ENCODE measurements at regions of chr3 and their contacts with region 1.

Region 1: GRCh38 chr3:56980798-56981390 is 79.6 kb upstream of the SPATA12 start:
- DNase-seq: peak; percentile 83
- H3K4me3 Mint-ChIP-seq: no peak overlapping the region
- H3K27ac Mint-ChIP-seq: peak overlapping the region; percentile 72
- H3K4me1 Mint-ChIP-seq: peaks cover 23% of the 10 kb centered on the region
- H3K27me3 Mint-ChIP-seq: no peaks in the 10 kb centered on the region

Region 2: GRCh38 chr3:56702490-56703315 is 278.2 kb before region 1 on chr3:
- CTCF ChIA-PET with region 1: interaction called, 244 read pairs
- POLR2A ChIA-PET with region 1: no interaction called
- intact Hi-C with region 1: loop called (anchors 2 kb)
- DNase-seq: peak; percentile 36
- H3K4me3 Mint-ChIP-seq: no peak overlapping the region
- H3K27ac Mint-ChIP-seq: no peak overlapping the region
- H3K4me1 Mint-ChIP-seq: peaks cover 11% of the 10 kb centered on the region
- H3K27me3 Mint-ChIP-seq: no peaks in the 10 kb centered on the region

Region 3: GRCh38 chr3:56862352-56863074 is 118.4 kb before region 1 on chr3:
- CTCF ChIA-PET with region 1: interaction called, 7 read pairs
- POLR2A ChIA-PET with region 1: interaction called, 6 read pairs
- intact Hi-C with region 1: loop called (anchors 1 kb)
- DNase-seq: peak; percentile 39
- H3K4me3 Mint-ChIP-seq: peak overlapping the region; percentile 32
- H3K27ac Mint-ChIP-seq: peak overlapping the region; percentile 81
- H3K4me1 Mint-ChIP-seq: peaks cover 73% of the 10 kb centered on the region
- H3K27me3 Mint-ChIP-seq: no peaks in the 10 kb centered on the region

Region 4: DNA sequence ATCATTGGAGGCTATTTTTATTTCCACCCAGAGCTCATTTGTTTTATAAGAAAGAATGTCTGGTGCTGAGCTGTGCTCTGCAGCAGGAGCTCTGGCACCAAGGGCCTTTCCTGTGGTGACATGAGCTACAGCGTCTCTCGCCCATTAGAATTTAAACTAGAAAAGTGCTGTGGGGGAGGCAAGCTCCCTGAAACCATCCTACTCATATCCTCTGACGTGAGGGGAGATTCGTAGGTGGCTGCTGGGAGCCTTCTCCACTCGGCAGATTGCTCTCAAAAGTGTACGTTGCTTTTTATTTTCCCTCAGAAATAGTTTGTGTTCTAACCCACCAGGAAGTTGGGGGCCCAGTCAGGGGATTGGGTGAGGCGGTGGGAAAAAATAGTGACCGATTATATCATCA is 102.8 kb before region 1 on chr3:
- CTCF ChIA-PET with region 1: interaction called, 3 read pairs
- POLR2A ChIA-PET with region 1: no interaction called
- intact Hi-C with region 1: loop called (anchors 1 kb)
- DNase-seq: peak; percentile 79
- H3K4me3 Mint-ChIP-seq: peak overlapping the region; percentile 57
- H3K27ac Mint-ChIP-seq: peak overlapping the region; percentile 85
- H3K4me1 Mint-ChIP-seq: peaks cover 80% of the 10 kb centered on the region
- H3K27me3 Mint-ChIP-seq: no peaks in the 10 kb centered on the region

Region 5: GRCh38 chr3:56930706-56931105 is 50.2 kb before region 1 on chr3:
- CTCF ChIA-PET with region 1: no interaction called
- POLR2A ChIA-PET with region 1: no interaction called
- intact Hi-C with region 1: loop called (anchors 2 kb)
- DNase-seq: peak; percentile 34
- H3K4me3 Mint-ChIP-seq: peak overlapping the region; percentile 16
- H3K27ac Mint-ChIP-seq: peak overlapping the region; percentile 74
- H3K4me1 Mint-ChIP-seq: peaks cover 71% of the 10 kb centered on the region
- H3K27me3 Mint-ChIP-seq: no peaks in the 10 kb centered on the region

Region 6: DNA sequence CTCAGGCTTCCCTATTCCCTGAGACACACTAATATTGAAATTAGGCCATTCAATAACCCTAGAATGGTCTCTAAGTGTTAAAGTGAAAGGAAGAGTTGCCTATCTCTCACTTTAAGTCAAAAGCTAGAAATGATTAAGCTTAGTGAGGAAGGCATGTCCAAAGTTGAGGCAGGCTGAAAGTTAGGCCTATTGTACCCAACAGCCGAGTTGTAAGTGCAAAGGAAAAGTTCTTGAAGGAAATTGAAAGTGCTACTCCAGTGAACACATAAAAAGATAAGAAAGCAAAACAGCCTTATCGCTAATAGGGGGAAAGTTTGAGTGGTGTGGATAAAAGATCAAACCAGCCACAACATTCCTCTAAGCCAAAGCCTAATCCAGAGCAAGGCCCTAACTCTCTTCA is 38.4 kb before region 1 on chr3:
- CTCF ChIA-PET with region 1: interaction called, 3 read pairs
- POLR2A ChIA-PET with region 1: no interaction called
- intact Hi-C with region 1: loop called (anchors 1 kb)
- DNase-seq: no peak
- H3K4me3 Mint-ChIP-seq: no peak overlapping the region
- H3K27ac Mint-ChIP-seq: peak overlapping the region; percentile 47
- H3K4me1 Mint-ChIP-seq: peaks cover 30% of the 10 kb centered on the region
- H3K27me3 Mint-ChIP-seq: no peaks in the 10 kb centered on the region

Region 7: GRCh38 chr3:56960234-56960917 is 20.5 kb before region 1 on chr3:
- CTCF ChIA-PET with region 1: interaction called, 3 read pairs
- POLR2A ChIA-PET with region 1: no interaction called
- intact Hi-C with region 1: loop called (anchors 2 kb)
- DNase-seq: peak; percentile 46
- H3K4me3 Mint-ChIP-seq: peak overlapping the region; percentile 40
- H3K27ac Mint-ChIP-seq: no peak overlapping the region
- H3K4me1 Mint-ChIP-seq: peaks cover 18% of the 10 kb centered on the region
- H3K27me3 Mint-ChIP-seq: no peaks in the 10 kb centered on the region

Region 8: GRCh38 chr3:57256844-57257243 is 275.9 kb after region 1 on chr3:
- CTCF ChIA-PET with region 1: no interaction called
- POLR2A ChIA-PET with region 1: no interaction called
- intact Hi-C with region 1: no loop called
- DNase-seq: no peak
- H3K4me3 Mint-ChIP-seq: no peak overlapping the region
- H3K27ac Mint-ChIP-seq: no peak overlapping the region
- H3K4me1 Mint-ChIP-seq: no peaks in the 10 kb centered on the region
- H3K27me3 Mint-ChIP-seq: no peaks in the 10 kb centered on the region

Measured in activated CD4-positive, alpha-beta memory T cell treated with anti-CD3 and anti-CD28 coated beads for 36 hours (primary cell).